ENCODE measurements at regions of chr2 and their contacts with region 1.

Region 1: GRCh38 chr2:196068271-196069209 is at the start of gene DNAH7:
- DNase-seq: peak; percentile 96
- ATAC-seq: peak; percentile 96
- H3K4me3 Mint-ChIP-seq: peak within 1 kb of the TSS; percentile 79
- H3K27ac Mint-ChIP-seq: peak within 1 kb of the TSS; percentile 75
- H3K4me1 Mint-ChIP-seq: peaks cover 19% of the 10 kb centered on the region
- H3K27me3 Mint-ChIP-seq: peaks cover 16% of the 10 kb centered on the region
- total RNA-seq, gene DNAH7: not detected

Region 2: DNA sequence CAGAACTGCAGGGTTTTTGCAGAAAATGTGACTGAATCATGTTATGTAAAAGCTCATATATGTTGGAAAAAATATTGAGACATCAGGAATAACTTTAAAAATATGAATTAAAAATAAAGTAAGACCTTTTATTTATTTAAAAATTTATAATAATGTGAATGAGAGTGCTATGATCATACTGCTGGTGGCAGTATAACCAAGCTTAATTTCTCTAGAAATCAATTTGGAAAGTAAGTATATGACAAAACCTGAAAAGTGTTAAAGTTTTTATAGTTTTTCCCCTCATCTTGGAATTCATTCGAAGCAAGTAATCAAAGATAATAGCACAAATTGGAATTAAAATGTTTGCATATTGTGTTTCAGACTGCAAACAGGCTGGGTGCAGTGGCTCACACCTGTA is 404.0 kb before region 1 on chr2:
- CTCF ChIA-PET with region 1: interaction called, 19 read pairs
- POLR2A ChIA-PET with region 1: no interaction called
- DNase-seq: no peak
- ATAC-seq: no peak
- H3K4me3 Mint-ChIP-seq: no peak overlapping the region
- H3K27ac Mint-ChIP-seq: no peak overlapping the region
- H3K4me1 Mint-ChIP-seq: peaks cover 21% of the 10 kb centered on the region
- H3K27me3 Mint-ChIP-seq: no peaks in the 10 kb centered on the region

Region 3: GRCh38 chr2:195930082-195930481 is 138.5 kb before region 1 on chr2:
- CTCF ChIA-PET with region 1: no interaction called
- POLR2A ChIA-PET with region 1: no interaction called
- DNase-seq: no peak
- ATAC-seq: no peak
- H3K4me3 Mint-ChIP-seq: no peak overlapping the region
- H3K27ac Mint-ChIP-seq: no peak overlapping the region
- H3K4me1 Mint-ChIP-seq: no peaks in the 10 kb centered on the region
- H3K27me3 Mint-ChIP-seq: no peaks in the 10 kb centered on the region

Region 4: GRCh38 chr2:196012314-196012713 is 56.2 kb before region 1 on chr2:
- CTCF ChIA-PET with region 1: no interaction called
- POLR2A ChIA-PET with region 1: no interaction called
- DNase-seq: no peak
- ATAC-seq: no peak
- H3K4me3 Mint-ChIP-seq: no peak overlapping the region
- H3K27ac Mint-ChIP-seq: no peak overlapping the region
- H3K4me1 Mint-ChIP-seq: no peaks in the 10 kb centered on the region
- H3K27me3 Mint-ChIP-seq: peaks cover 4% of the 10 kb centered on the region

Region 5: DNA sequence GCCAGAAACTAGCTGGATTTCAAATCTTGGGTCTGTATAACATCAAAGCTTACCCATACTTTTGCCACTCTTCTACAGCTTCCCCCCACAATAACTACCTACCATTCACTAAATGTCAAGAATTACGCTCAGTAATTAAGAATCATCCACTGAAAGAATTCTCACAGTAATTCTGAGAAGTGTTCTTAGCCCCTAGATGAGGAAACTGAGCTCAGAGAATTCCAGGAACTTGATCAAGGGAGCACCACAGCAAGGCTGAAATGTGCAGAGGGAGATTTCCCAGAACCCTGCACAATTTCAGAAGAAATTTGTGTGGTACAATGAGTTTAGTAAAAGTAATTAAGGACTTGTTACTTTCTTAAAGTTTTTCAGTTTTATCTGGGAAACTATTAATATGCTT is 297.4 kb after region 1 on chr2:
- CTCF ChIA-PET with region 1: interaction called, 11 read pairs
- POLR2A ChIA-PET with region 1: no interaction called
- DNase-seq: no peak
- ATAC-seq: no peak
- H3K4me3 Mint-ChIP-seq: no peak overlapping the region
- H3K27ac Mint-ChIP-seq: peak overlapping the region; percentile 43
- H3K4me1 Mint-ChIP-seq: peaks cover 25% of the 10 kb centered on the region
- H3K27me3 Mint-ChIP-seq: no peaks in the 10 kb centered on the region

Measured in activated CD8-positive, alpha-beta T cell treated with anti-CD3 and anti-CD28 coated beads, Interleukin-2, amount 10 ng/mL, durations not matched to agents 7 days and 5 days (primary cell).